K562 (cell line): ENCODE measurements at regions of chr12 and their contacts with region 1.

Region 1: GRCh38 chr12:57744777-57745484 is at the start of gene TSPAN31:
- DNase-seq: peak; percentile 78 to 98 (median 88)
- ATAC-seq: peak; percentile 93
- H3K4me3 ChIP-seq: peak within 1 kb of the TSS; percentile 59
- H3K27ac ChIP-seq: peak within 1 kb of the TSS; percentile 84
- H3K4me1 ChIP-seq: peaks cover 7 to 12% of the 10 kb centered on the region in 2 experiments; a peak in 3 of 5 replicates
- H3K27me3 ChIP-seq: peaks cover 0 to 3% of the 10 kb centered on the region in 2 experiments; a peak in 2 of 5 replicates
- CTCF ChIP-seq: 0 out of 6 replicates have a peak, but pooled peaks of 1 of the 3 experiments have one; percentile 0
- EP300 ChIP-seq: no peak; the same call in 1 of the 2 replicates
- POLR2A ChIP-seq: peak; percentile 85
- RAD21 ChIP-seq: no peak
- polyA plus RNA-seq, gene TSPAN31: 20.1 to 26.4 TPM

Region 2: GRCh38 chr12:57319678-57320469 is 425.1 kb before region 1 on chr12:
- CTCF ChIA-PET with region 1: no interaction called
- POLR2A ChIA-PET with region 1: no interaction called
- in situ Hi-C with region 1: loop called (anchors 10 kb)
- intact Hi-C with region 1: no loop called
- DNase-seq: peak in 2 of 4 experiments; percentile 18 to 29
- ATAC-seq: peak; percentile 66
- H3K4me3 ChIP-seq: no peak overlapping the region
- H3K27ac ChIP-seq: peak overlapping the region; percentile 69
- H3K4me1 ChIP-seq: peaks cover 9% of the 10 kb centered on the region in 2 experiments; a peak in 2 of 5 replicates
- H3K27me3 ChIP-seq: no peaks in the 10 kb centered on the region
- CTCF ChIP-seq: no peak
- EP300 ChIP-seq: no peak
- POLR2A ChIP-seq: no peak
- RAD21 ChIP-seq: no peak

Region 3: GRCh38 chr12:57722716-57723629 is 22.0 kb before region 1 on chr12:
- CTCF ChIA-PET with region 1: no interaction called
- POLR2A ChIA-PET with region 1: no interaction called
- in situ Hi-C with region 1: no loop called
- intact Hi-C with region 1: no loop called
- DNase-seq: no peak
- ATAC-seq: peak; percentile 21; the same call in 1 of the 3 replicates
- H3K4me3 ChIP-seq: no peak overlapping the region
- H3K27ac ChIP-seq: no peak overlapping the region
- H3K4me1 ChIP-seq: peaks cover 0 to 20% of the 10 kb centered on the region in 2 experiments; a peak in 2 of 5 replicates
- H3K27me3 ChIP-seq: peaks cover 0 to 4% of the 10 kb centered on the region in 2 experiments; a peak in 1 of 5 replicates
- CTCF ChIP-seq: 0 out of 6 replicates have a peak, but pooled peaks of 1 of the 3 experiments have one; percentile 5
- EP300 ChIP-seq: no peak
- POLR2A ChIP-seq: no peak
- RAD21 ChIP-seq: 0 out of 4 replicates have a peak, but pooled peaks of 1 of the 2 experiments have one; percentile 3